Right ventricle myocardium inferior (tissue), 1 donor: ENCODE measurements at regions of chr3 and their contacts with region 1.

Region 1: GRCh38 chr3:45026957-45027356 is 854 bp downstream of the CLEC3B start:
- DNase-seq: peak; percentile 91
- ATAC-seq: peak; percentile 89

Region 2: GRCh38 chr3:44976002-44976815 is 50.7 kb before region 1 on chr3 and contains the starts of genes EXOSC7 and ZDHHC3:
- intact Hi-C with region 1: loop called (anchors 5 kb)
- DNase-seq: peak; percentile 96
- ATAC-seq: peak; percentile 91
- total RNA-seq, gene EXOSC7: 23.1 TPM
- total RNA-seq, gene ZDHHC3: 35.8 TPM

Region 3: GRCh38 chr3:44995142-44995770 is 31.7 kb before region 1 on chr3:
- intact Hi-C with region 1: loop called (anchors 2 kb)
- DNase-seq: no peak
- ATAC-seq: peak; percentile 75

Region 4: GRCh38 chr3:45092132-45093031 is 65.4 kb after region 1 on chr3:
- intact Hi-C with region 1: no loop called
- DNase-seq: no peak
- ATAC-seq: no peak

Region 5: GRCh38 chr3:45343947-45344346 is 317.0 kb after region 1 on chr3:
- intact Hi-C with region 1: no loop called
- DNase-seq: no peak
- ATAC-seq: no peak